Calu3 (cell line): ENCODE measurements at regions of chr2 and their contacts with region 1.

Region 1: DNA sequence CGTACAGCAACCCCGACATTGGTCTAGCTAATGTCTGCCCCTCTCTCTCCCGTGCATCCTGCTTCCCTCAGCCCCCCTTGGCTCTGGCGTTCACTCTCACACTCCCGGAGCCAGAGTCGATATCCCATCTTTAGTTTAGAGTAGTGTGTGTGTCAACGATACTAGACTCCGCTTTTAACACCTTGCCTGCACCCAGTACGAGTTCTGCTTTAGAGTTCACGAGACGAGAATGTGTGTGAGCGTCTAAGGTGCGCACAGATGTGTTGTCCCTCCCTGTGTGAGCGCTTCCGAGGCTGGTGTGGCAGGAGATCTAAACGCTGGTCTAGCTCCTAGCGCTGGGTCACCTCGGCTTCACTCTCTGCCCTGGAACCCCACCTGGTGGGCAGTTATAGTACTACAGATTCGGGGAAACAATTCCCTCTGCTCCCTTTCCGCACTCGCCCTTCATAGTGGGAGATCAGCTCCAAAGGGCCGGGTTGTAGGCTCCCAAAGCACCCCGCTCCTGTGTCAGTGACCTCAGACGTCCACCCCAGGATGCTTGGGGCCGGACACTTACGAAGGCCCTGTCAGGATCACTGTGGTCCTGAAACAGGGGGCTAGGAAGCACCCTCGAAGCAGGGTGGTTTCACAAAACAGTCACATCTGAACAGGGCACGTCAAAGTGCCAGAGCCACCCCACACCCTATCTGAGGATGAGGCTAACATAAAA is 2.6 kb upstream of the CYP26B1 start:
- DNase-seq: peak; percentile 93
- H3K4me3 Mint-ChIP-seq: peak overlapping the region; percentile 92
- H3K27ac Mint-ChIP-seq: no peak overlapping the region
- H3K4me1 Mint-ChIP-seq: peaks cover 31% of the 10 kb centered on the region
- H3K27me3 Mint-ChIP-seq: peaks cover 66% of the 10 kb centered on the region
- CTCF ChIP-seq: peak; percentile 72

Region 2: DNA sequence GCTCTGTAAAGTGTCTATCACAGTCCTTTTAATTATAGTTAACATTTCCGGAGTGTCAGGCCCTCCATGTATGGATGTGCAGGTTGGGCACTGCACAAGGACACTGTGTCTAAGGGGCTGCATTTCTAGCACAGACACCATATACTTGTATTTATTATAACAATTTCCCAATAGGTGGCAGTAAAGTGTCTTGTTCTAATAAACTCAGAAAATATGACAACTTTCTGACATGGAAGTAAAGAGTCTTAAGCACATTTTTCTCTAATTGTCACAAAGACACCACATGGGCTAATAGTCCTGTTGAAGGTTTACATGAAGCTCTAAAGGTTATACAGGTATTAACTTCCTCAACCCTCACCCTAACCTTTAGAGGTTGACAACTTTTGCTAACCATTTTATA is 540.4 kb before region 1 on chr2:
- CTCF ChIA-PET with region 1: interaction called, 6 read pairs
- intact Hi-C with region 1: loop called (anchors 5 kb)
- DNase-seq: no peak
- H3K4me3 Mint-ChIP-seq: no peak overlapping the region
- H3K27ac Mint-ChIP-seq: no peak overlapping the region
- H3K4me1 Mint-ChIP-seq: no peaks in the 10 kb centered on the region
- H3K27me3 Mint-ChIP-seq: peaks cover 64% of the 10 kb centered on the region
- CTCF ChIP-seq: peak; percentile 39

Region 3: GRCh38 chr2:71876542-71877451 is 273.5 kb before region 1 on chr2:
- CTCF ChIA-PET with region 1: no interaction called
- intact Hi-C with region 1: loop called (anchors 1 kb)
- DNase-seq: no peak
- H3K4me3 Mint-ChIP-seq: no peak overlapping the region
- H3K27ac Mint-ChIP-seq: no peak overlapping the region
- H3K4me1 Mint-ChIP-seq: peaks cover 9% of the 10 kb centered on the region
- H3K27me3 Mint-ChIP-seq: peaks cover 71% of the 10 kb centered on the region
- CTCF ChIP-seq: no peak

Region 4: DNA sequence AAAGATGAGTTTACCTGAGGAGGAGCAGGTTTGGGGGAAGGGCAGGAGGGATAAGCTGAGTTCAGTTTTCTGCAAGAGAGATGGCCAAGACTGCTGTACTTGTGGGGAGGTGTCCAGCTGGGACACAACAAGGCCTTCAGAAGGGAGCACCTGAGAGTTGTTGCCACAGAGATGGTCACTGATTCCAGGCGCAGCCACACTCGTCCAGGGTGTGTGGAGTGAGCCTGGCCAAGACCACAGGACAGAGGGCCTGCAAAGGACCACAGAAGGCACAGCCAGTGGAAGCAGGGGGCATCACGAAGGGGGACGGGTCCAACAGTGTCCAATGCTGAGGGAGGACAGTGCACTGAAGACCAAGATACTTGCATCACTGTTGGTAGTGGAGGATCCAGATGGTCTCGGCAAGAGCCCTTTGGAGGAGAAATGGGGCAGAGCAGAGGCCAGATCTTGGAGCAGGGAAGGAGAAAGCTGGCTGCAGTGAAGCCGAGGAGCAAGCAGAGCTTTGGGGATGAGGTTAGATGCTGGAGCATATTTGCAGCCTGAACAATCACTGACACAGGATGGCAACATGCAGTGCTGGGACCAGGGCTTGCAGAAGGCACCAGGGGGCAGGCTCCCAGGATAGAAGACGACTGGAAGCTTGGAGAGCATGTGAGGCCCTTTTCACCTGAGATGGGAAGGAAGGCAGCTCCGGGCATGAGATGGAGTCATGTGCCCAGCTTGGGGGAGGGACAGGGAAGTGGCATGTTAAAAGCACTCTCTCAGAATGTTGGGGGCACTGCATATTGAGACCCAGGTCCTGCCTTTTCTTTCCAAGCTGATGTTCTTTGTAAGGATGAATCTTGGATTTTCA is 216.6 kb before region 1 on chr2:
- CTCF ChIA-PET with region 1: interaction called, 19 read pairs
- intact Hi-C with region 1: no loop called
- DNase-seq: peak; percentile 43
- H3K4me3 Mint-ChIP-seq: no peak overlapping the region
- H3K27ac Mint-ChIP-seq: no peak overlapping the region
- H3K4me1 Mint-ChIP-seq: no peaks in the 10 kb centered on the region
- H3K27me3 Mint-ChIP-seq: peaks cover 25% of the 10 kb centered on the region
- CTCF ChIP-seq: no peak

Region 5: GRCh38 chr2:72579591-72580180 is 429.4 kb after region 1 on chr2:
- CTCF ChIA-PET with region 1: interaction called, 25 read pairs
- intact Hi-C with region 1: loop called (anchors 1 kb)
- DNase-seq: no peak
- H3K4me3 Mint-ChIP-seq: no peak overlapping the region
- H3K27ac Mint-ChIP-seq: no peak overlapping the region
- H3K4me1 Mint-ChIP-seq: no peaks in the 10 kb centered on the region
- H3K27me3 Mint-ChIP-seq: no peaks in the 10 kb centered on the region
- CTCF ChIP-seq: peak; percentile 46